ENCODE measurements at regions of chr9 and their contacts with region 1.

Region 1: DNA sequence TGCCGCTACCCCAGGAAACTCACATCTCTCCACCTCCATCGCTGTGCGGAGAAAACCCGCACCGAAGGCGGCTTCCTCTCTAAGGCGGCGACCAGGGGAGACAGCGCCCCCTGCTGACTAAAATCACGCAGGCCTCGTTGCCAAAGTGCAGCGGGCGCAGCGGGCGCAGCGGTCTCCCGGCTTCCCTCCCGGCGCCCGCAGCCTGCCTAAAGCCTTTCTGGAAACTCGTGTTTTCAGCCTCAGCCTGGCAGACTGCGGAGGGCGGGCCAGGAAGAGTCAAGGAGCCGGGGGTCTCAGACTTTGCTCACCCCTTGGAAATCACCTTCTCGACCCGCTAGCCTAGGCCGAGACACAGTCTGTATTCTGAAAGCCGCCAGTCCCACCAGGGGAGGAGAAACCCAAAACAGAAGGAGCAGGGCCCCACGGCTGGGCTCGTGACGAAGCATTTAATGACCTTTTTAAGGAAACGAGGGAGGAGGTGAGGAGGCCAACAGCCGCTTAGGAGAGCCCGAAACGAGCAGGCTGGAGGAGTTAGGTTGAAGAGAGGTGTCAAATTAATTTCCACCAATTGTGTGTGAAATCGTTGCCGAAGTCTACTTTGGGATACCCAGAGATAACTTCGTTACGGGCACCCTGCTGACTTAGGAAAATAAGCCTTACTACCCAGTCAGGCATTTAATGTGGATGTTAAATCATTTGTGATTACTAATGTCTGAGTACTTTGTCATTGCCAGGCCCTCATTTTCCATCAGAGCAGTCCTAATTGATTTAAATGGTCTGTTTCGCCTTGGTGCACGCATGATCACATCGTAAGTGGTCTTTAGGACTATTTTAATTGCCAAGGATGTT is 7.3 kb upstream of the FOXB2 start:
- DNase-seq: peak in 3 of 5 donors; percentile 45 to 75 (median 53)
- ATAC-seq: peak in 3 of 4 donors; percentile 42 to 66 (median 55)
- H3K4me3 ChIP-seq: peak overlapping the region in 4 of 12 donors; percentile 1 to 21 (median 8)
- H3K27ac ChIP-seq: no peak overlapping the region
- H3K4me1 ChIP-seq: peaks cover 0 to 38% (median 13%) of the 10 kb centered on the region in 12 donors
- H3K27me3 ChIP-seq: peaks cover 63 to 100% (median 86%) of the 10 kb centered on the region in 9 donors
- CTCF ChIP-seq: peak; percentile 56 to 85 (median 74)
- POLR2A ChIP-seq: no peak

Region 2: GRCh38 chr9:76943054-76943453 is 69.1 kb before region 1 on chr9:
- intact Hi-C with region 1: no loop called
- DNase-seq: no peak
- ATAC-seq: no peak
- H3K4me3 ChIP-seq: no peak overlapping the region
- H3K27ac ChIP-seq: no peak overlapping the region
- H3K4me1 ChIP-seq: no peaks in the 10 kb centered on the region
- H3K27me3 ChIP-seq: no peaks in the 10 kb centered on the region
- CTCF ChIP-seq: no peak
- POLR2A ChIP-seq: no peak

Region 3: GRCh38 chr9:77038281-77039036 is 26.3 kb after region 1 on chr9:
- intact Hi-C with region 1: loop called in 1 of 10 experiments (anchors 2 kb)
- DNase-seq: no peak
- ATAC-seq: no peak
- H3K4me3 ChIP-seq: no peak overlapping the region
- H3K27ac ChIP-seq: no peak overlapping the region
- H3K4me1 ChIP-seq: no peaks in the 10 kb centered on the region
- H3K27me3 ChIP-seq: peaks cover 0 to 29% (median 10%) of the 10 kb centered on the region in 9 donors
- CTCF ChIP-seq: no peak
- POLR2A ChIP-seq: no peak